Right ventricle myocardium superior (tissue), 1 donor: ENCODE measurements at regions of chr6 and their contacts with region 1.

Region 1: GRCh38 chr6:32529697-32530429 is at the start of gene HLA-DRB5:
- DNase-seq: peak; percentile 43
- ATAC-seq: peak; percentile 73
- total RNA-seq, gene HLA-DRB5: 17.7 TPM

Region 2: GRCh38 chr6:31271641-31272357 is 1258.1 kb before region 1 on chr6 and contains the start of gene HLA-C:
- intact Hi-C with region 1: no loop called
- DNase-seq: peak; percentile 88
- ATAC-seq: peak; percentile 99
- total RNA-seq, gene HLA-C: 156 TPM

Region 3: GRCh38 chr6:32393665-32394420 is 136.0 kb before region 1 on chr6:
- intact Hi-C with region 1: no loop called
- DNase-seq: no peak
- ATAC-seq: peak; percentile 58

Region 4: DNA sequence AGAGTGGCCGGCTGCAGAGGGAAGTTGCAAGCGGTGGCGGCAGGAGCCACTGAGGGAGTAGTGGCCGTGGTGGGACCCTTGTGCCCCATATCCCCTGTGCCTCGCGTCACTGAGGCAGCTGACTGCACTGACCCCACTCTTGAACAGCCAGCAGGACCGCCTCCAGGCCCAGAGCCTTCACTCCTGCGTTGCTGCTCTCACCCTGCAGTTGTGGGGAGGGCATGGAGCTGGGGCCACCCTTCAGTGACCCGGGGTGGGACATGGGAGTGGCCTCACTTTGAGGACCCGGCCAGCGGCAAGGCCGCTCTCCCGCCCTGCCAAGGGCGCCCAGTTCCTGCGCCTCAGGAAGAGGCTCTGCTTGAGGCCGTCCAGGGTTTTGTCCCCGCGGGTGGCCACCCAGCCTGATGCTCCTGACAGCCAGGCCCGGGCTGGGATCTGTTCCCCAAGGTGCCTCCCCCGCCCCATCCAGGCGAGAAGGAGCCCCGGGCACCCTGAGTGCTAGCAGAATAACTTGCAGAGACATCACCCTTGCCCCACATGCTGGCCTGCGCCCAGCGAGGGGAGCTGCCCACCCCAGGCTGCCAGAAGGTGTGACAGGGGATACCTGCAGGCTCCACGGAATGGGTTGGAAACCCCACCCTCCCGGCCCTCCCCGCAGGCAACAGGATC is 45.8 kb before region 1 on chr6:
- intact Hi-C with region 1: loop called (anchors 10 kb)
- DNase-seq: peak; percentile 26
- ATAC-seq: no peak

Region 5: GRCh38 chr6:32570363-32570905 is 40.6 kb after region 1 on chr6:
- intact Hi-C with region 1: loop called (anchors 5 kb)
- DNase-seq: no peak
- ATAC-seq: no peak